ENCODE measurements at regions of chr2 and their contacts with region 1.

Region 1: GRCh38 chr2:47016172-47016913 is 100.7 kb upstream of the MCFD2 start:
- DNase-seq: peak; percentile 87 to 100
- H3K4me3 ChIP-seq: no peak overlapping the region
- H3K27ac ChIP-seq: peak overlapping the region; percentile 86
- H3K4me1 ChIP-seq: peaks cover 36% of the 10 kb centered on the region
- H3K27me3 ChIP-seq: no peaks in the 10 kb centered on the region
- CTCF ChIP-seq: 0 out of 2 replicates have a peak, but pooled peaks have one; percentile 31

Region 2: GRCh38 chr2:47029737-47030524 is 13.6 kb after region 1 on chr2:
- CTCF ChIA-PET with region 1: no interaction called
- POLR2A ChIA-PET with region 1: interaction called, 3 read pairs
- intact Hi-C with region 1: loop called (anchors 1 kb)
- DNase-seq: peak; percentile 90 to 98
- H3K4me3 ChIP-seq: no peak overlapping the region
- H3K27ac ChIP-seq: peak overlapping the region; percentile 99
- H3K4me1 ChIP-seq: peaks cover 88% of the 10 kb centered on the region
- H3K27me3 ChIP-seq: no peaks in the 10 kb centered on the region
- CTCF ChIP-seq: no peak

Region 3: DNA sequence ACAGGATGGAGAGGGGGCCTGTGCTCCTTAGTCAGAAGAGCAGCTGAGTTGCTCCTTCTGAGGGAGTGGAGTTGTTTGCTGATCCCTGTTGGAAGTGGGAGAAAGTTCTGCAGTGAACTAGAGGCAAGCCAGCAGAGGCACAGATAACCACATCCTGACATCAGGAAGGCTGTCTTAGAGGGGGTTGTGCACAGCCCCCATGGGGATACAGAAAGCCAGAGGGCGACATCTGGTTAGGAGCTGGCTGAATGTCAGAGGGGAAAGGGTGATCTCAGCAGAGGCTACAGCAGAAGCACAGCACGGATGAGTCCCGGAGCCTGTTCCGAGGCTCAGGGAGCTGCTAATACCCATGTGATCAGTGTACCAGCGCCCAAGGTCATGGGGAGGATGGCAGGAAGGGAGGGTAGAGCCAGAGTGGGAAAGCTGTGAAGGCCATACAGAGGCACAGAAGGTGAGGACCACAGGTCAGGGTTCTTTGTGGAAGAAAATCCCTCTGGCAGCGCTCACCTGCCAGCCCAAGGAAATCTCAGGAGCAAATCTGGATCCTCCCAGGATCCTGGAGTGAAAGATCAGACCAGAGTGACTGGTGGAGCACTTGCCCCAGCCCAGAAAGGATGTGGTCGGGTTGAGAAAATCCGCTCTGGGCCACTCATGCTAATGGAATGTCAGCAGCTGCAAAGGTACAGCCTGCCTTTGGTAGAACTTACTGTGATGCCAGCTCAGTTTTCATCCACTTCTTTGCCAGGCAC is 27.0 kb after region 1 on chr2:
- CTCF ChIA-PET with region 1: no interaction called
- POLR2A ChIA-PET with region 1: no interaction called
- intact Hi-C with region 1: loop called (anchors 1 kb)
- DNase-seq: peak; percentile 91 to 99
- H3K4me3 ChIP-seq: peak overlapping the region; percentile 45
- H3K27ac ChIP-seq: peak overlapping the region; percentile 89
- H3K4me1 ChIP-seq: peaks cover 65% of the 10 kb centered on the region
- H3K27me3 ChIP-seq: no peaks in the 10 kb centered on the region
- CTCF ChIP-seq: 0 out of 2 replicates have a peak, but pooled peaks have one; percentile 24

Region 4: GRCh38 chr2:47225061-47225859 is 208.9 kb after region 1 on chr2:
- CTCF ChIA-PET with region 1: no interaction called
- POLR2A ChIA-PET with region 1: interaction called, 21 read pairs
- intact Hi-C with region 1: no loop called
- DNase-seq: peak; percentile 81 to 84
- H3K4me3 ChIP-seq: no peak overlapping the region
- H3K27ac ChIP-seq: no peak overlapping the region
- H3K4me1 ChIP-seq: peaks cover 33% of the 10 kb centered on the region
- H3K27me3 ChIP-seq: no peaks in the 10 kb centered on the region
- CTCF ChIP-seq: no peak

Region 5: DNA sequence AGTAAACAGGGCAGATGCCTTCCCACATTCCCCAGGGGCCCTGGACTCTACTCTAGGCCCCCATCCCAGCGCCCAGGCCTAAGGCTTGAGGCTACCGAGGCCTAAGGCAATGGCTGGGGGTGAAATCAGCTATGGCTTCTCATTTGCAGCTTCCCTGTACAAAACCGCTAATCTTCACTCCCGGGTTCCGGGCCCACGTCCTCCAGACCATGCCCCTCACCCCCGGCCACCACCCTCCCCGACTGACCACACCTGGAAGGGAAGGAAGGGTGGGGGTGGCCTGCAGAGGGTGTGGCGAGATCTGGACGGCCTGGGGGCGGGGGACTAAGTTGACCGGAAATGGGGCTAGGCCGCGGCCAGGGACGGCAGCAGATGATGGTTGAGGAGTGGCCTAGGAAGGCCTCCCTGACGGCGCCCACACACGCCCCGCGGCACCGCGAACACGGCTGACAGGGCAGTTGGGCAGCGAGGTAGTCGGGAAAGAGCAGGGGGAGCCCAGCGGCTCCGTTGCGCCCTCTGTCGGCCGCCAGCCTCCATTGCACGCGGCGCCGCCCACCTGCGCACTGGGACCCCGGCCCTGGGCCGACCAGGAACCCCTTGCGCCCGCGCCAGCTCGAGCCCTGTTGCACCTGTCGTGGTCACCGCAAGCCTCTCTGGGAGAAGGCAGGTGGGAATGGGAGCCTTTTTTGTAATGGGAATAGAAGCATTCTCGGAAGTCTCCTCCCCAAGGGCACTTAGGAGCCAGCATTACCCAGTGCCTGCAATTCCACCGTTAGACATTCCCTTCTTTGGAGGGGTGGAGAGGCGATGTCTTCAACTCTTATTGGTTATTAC is 255.9 kb after region 1 on chr2:
- CTCF ChIA-PET with region 1: no interaction called
- POLR2A ChIA-PET with region 1: no interaction called
- intact Hi-C with region 1: loop called (anchors 1 kb)
- DNase-seq: peak; percentile 79 to 92
- H3K4me3 ChIP-seq: peak overlapping the region; percentile 56; the same call in 1 of the 2 replicates
- H3K27ac ChIP-seq: peak overlapping the region; percentile 99
- H3K4me1 ChIP-seq: peaks cover 62% of the 10 kb centered on the region
- H3K27me3 ChIP-seq: no peaks in the 10 kb centered on the region
- CTCF ChIP-seq: peak; percentile 100

Region 6: GRCh38 chr2:47422560-47422959 is 406.2 kb after region 1 on chr2:
- CTCF ChIA-PET with region 1: no interaction called
- POLR2A ChIA-PET with region 1: no interaction called
- intact Hi-C with region 1: no loop called
- DNase-seq: peak in 1 of 2 experiments; percentile 89
- H3K4me3 ChIP-seq: no peak overlapping the region
- H3K27ac ChIP-seq: peak overlapping the region; percentile 59
- H3K4me1 ChIP-seq: peaks cover 19% of the 10 kb centered on the region
- H3K27me3 ChIP-seq: no peaks in the 10 kb centered on the region
- CTCF ChIP-seq: no peak